ENCODE measurements at regions of chr9 and their contacts with region 1.

Region 1: DNA sequence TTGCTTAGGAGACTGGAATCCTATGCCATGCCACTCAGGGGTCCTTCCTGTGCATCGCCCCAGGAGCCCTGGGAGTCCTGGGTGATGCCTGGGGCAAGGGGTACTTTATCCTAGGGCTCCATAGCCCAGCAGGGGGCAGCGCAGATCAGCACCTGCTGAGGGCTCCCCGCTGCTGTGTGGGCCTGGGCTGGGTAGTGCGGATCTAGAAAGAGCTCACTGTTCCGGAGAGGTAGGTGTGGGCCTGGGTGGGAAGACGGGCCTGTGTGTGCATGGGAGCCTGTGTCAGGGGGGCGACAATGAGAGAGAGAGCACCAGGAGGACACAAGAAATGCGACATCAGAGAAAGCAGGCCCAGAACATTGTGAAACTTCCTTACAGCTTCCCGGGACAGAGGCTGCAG is 11.4 kb upstream of the DAB2IP start:
- DNase-seq: peak; percentile 36
- H3K4me3 ChIP-seq: no peak overlapping the region
- H3K27ac ChIP-seq: no peak overlapping the region
- H3K4me1 ChIP-seq: peaks cover 17% of the 10 kb centered on the region
- H3K27me3 ChIP-seq: no peaks in the 10 kb centered on the region
- CTCF ChIP-seq: peak; percentile 72 to 80
- POLR2A ChIP-seq: no peak

Region 2: DNA sequence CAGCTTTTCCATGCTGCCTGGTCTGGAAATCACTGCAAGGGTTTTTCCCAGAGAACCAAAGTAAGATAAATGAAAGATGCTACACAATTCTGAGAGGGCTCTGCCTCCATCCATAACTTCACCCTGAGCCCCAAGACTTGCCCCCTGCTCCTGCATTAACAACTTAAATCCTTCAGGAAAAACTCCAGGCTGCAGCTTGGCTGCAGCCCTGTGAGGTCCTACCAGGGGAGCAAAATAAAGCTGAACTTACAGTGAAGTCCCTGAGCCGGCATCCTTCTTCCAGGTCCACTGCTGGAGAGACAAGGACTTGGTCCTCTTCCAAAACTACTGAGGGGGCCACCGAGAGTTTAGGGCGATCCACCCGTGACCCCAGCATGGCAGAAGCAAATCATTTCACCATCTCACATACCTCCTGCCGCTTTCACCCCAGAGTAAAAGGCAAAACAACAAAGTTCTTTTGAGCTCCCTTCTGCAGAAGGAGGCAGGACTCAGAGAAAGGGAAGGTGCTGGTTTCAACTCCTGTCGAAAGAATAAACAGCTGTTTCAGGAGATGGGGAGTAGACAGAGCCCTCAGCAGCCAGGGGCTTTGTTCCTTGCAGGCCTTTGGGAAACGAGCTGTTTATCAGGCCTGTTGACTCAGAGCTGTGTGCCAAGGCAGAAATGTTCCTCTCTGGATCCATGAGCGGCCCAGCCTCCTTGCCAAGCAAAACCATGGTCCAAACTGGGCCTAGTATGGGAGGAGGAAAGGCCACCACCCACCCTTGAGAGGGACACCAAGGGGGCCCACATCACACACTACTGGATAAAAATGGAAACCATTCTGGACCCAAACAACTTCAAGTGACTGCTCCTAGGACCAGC is 161.0 kb before region 1 on chr9:
- CTCF ChIA-PET with region 1: no interaction called
- POLR2A ChIA-PET with region 1: no interaction called
- dilution Hi-C with region 1: no loop called
- intact Hi-C with region 1: no loop called
- DNase-seq: peak; percentile 59
- H3K4me3 ChIP-seq: no peak overlapping the region
- H3K27ac ChIP-seq: no peak overlapping the region
- H3K4me1 ChIP-seq: peaks cover 6% of the 10 kb centered on the region
- H3K27me3 ChIP-seq: peaks cover 11 to 16% of the 10 kb centered on the region in 2 experiments
- CTCF ChIP-seq: no peak
- POLR2A ChIP-seq: no peak

Region 3: GRCh38 chr9:121576281-121577075 is 63.6 kb before region 1 on chr9:
- CTCF ChIA-PET with region 1: no interaction called
- POLR2A ChIA-PET with region 1: no interaction called
- dilution Hi-C with region 1: no loop called
- intact Hi-C with region 1: no loop called
- DNase-seq: no peak
- H3K4me3 ChIP-seq: no peak overlapping the region
- H3K27ac ChIP-seq: no peak overlapping the region
- H3K4me1 ChIP-seq: no peaks in the 10 kb centered on the region
- H3K27me3 ChIP-seq: peaks cover 0 to 1% of the 10 kb centered on the region in 2 experiments
- CTCF ChIP-seq: no peak
- POLR2A ChIP-seq: no peak

Region 4: GRCh38 chr9:121621113-121621449 is 19.0 kb before region 1 on chr9:
- CTCF ChIA-PET with region 1: interaction called, 22 read pairs
- POLR2A ChIA-PET with region 1: no interaction called
- dilution Hi-C with region 1: no loop called
- intact Hi-C with region 1: no loop called
- DNase-seq: peak; percentile 35
- H3K4me3 ChIP-seq: no peak overlapping the region
- H3K27ac ChIP-seq: no peak overlapping the region
- H3K4me1 ChIP-seq: no peaks in the 10 kb centered on the region
- H3K27me3 ChIP-seq: no peaks in the 10 kb centered on the region
- CTCF ChIP-seq: peak; percentile 38 to 61
- POLR2A ChIP-seq: no peak

Region 5: DNA sequence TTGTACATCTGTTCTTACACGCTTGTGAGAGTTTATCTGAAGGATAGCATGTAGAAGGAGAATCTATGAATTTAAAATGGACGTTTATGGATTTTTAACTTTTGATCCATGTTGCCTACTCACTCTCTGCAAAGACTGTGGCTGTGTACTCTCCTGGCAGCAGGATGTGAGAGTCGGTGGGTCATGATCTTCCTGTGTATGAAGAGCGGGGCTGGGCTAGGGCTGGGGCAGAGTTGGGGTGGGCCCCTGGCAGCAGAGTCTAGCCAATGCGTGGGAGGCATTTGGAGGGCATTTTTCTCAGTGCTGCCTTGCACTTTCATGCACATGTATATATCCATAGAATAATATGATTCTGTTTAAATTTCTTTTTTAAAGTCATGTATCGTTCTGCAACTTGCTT is 12.6 kb before region 1 on chr9:
- CTCF ChIA-PET with region 1: interaction called, 10 read pairs
- POLR2A ChIA-PET with region 1: no interaction called
- dilution Hi-C with region 1: no loop called
- intact Hi-C with region 1: no loop called
- DNase-seq: no peak
- H3K4me3 ChIP-seq: no peak overlapping the region
- H3K27ac ChIP-seq: no peak overlapping the region
- H3K4me1 ChIP-seq: no peaks in the 10 kb centered on the region
- H3K27me3 ChIP-seq: no peaks in the 10 kb centered on the region
- CTCF ChIP-seq: no peak
- POLR2A ChIP-seq: no peak

Region 6: GRCh38 chr9:121650217-121651007 is 10.3 kb after region 1 on chr9:
- CTCF ChIA-PET with region 1: interaction called, 16 read pairs
- POLR2A ChIA-PET with region 1: no interaction called
- dilution Hi-C with region 1: no loop called
- intact Hi-C with region 1: no loop called
- DNase-seq: peak; percentile 65
- H3K4me3 ChIP-seq: no peak overlapping the region
- H3K27ac ChIP-seq: no peak overlapping the region
- H3K4me1 ChIP-seq: peaks cover 25% of the 10 kb centered on the region
- H3K27me3 ChIP-seq: no peaks in the 10 kb centered on the region
- CTCF ChIP-seq: no peak
- POLR2A ChIP-seq: no peak

Region 7: GRCh38 chr9:121692606-121693387 is 52.7 kb after region 1 on chr9:
- CTCF ChIA-PET with region 1: interaction called, 143 read pairs
- POLR2A ChIA-PET with region 1: no interaction called
- dilution Hi-C with region 1: no loop called
- intact Hi-C with region 1: loop called (anchors 1 kb)
- DNase-seq: no peak
- H3K4me3 ChIP-seq: no peak overlapping the region
- H3K27ac ChIP-seq: no peak overlapping the region
- H3K4me1 ChIP-seq: no peaks in the 10 kb centered on the region
- H3K27me3 ChIP-seq: no peaks in the 10 kb centered on the region
- CTCF ChIP-seq: no peak
- POLR2A ChIP-seq: no peak

Region 8: DNA sequence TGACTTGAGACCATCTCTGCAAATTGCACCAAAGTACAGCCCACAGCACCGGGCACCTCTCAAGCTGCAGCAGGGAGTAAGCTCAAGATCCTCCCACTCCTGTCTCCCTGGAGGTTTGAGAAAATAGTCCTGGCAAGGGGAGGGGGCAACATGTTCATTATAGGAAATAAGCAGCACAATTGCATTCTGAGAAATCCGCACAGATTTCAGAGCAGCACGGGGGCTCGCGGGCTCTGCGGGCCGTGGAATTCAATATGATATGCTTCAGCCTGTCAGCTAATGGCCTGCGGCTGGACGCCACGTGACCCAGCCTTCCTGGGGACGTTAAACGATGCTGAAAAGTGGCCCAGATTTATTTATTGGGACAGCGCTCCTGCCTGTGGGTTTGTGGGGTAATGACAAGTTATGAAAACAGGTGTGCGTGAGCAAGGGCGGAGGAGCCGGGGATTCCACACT is 167.8 kb after region 1 on chr9:
- CTCF ChIA-PET with region 1: no interaction called
- POLR2A ChIA-PET with region 1: no interaction called
- dilution Hi-C with region 1: no loop called
- intact Hi-C with region 1: no loop called
- DNase-seq: no peak
- H3K4me3 ChIP-seq: no peak overlapping the region
- H3K27ac ChIP-seq: no peak overlapping the region
- H3K4me1 ChIP-seq: no peaks in the 10 kb centered on the region
- H3K27me3 ChIP-seq: peaks cover 0 to 4% of the 10 kb centered on the region in 2 experiments
- CTCF ChIP-seq: no peak
- POLR2A ChIP-seq: no peak

Region 9: DNA sequence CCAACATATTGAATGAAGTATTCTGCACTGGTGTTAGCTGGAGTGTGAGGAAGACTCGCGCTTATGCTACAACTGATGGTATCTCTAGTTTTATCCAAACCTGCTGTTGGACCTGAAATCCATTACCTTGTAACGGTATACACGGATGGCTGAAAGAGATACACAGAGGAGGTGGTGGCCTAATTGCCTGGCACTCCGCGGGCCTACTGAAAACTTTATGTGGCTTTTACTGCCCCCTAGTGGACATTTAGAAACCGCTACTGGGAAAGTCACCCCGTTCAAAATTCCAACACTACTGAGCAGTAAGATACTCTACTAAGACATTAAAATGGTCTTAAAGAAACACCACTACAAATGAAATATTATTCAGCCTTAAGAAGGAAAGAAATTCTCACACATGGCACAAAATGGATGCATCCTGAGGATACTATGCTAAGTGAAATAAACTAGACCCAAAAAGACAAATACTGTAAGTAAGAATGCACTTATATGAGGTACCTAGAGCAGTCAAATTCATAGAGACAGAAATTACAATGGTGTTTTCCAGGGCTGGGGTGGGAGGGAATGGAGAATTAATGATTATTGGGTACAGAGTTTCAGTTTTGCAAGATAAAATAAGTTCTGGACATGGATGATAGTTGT is 352.6 kb after region 1 on chr9:
- CTCF ChIA-PET with region 1: interaction called, 8 read pairs
- POLR2A ChIA-PET with region 1: no interaction called
- dilution Hi-C with region 1: no loop called
- intact Hi-C with region 1: loop called (anchors 1 kb)
- DNase-seq: peak; percentile 74
- H3K4me3 ChIP-seq: no peak overlapping the region
- H3K27ac ChIP-seq: no peak overlapping the region
- H3K4me1 ChIP-seq: peaks cover 5% of the 10 kb centered on the region
- H3K27me3 ChIP-seq: no peaks in the 10 kb centered on the region
- CTCF ChIP-seq: peak; percentile 58 to 68
- POLR2A ChIP-seq: no peak